Common myeloid progenitor, CD34-positive (primary cell): ENCODE measurements at regions of chr1 and their contacts with region 1.

Region 1: GRCh38 chr1:159161001-159161718 is 10.3 kb upstream of the CADM3 start:
- DNase-seq: peak; percentile 75 to 84 (median 80)
- H3K4me3 ChIP-seq: no peak overlapping the region
- H3K27ac ChIP-seq: no peak overlapping the region
- H3K4me1 ChIP-seq: no peaks in the 10 kb centered on the region
- H3K27me3 ChIP-seq: peaks cover 0 to 10% (median 4%) of the 10 kb centered on the region in 5 experiments

Region 2: DNA sequence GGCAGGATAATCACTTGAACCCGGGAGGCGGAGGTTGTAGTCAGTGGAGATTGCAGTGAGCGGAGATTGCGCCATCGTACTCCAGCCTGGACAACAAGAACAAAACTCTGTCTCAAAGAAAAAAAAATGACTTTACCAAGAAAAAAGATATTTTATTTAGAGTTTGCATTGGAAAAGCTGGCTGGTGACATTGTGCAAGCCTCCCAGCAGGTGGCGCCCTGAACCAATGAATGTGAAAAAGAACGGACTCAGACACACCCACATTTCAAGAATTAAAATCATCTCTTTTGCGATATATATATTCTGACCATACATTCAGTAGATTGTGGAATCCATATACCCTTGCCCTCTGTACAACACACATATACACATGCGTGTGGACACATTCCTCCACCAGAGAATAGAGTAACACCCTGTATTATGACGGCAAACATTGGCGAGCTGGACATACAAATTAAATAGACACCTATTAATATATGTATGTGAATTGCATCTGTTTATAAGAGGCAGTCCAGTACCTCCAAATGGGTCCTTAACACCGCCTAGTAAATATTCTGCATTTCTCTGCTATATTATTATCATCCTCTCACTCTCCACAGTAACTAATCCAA is 28.8 kb before region 1 on chr1:
- CTCF ChIA-PET with region 1: interaction called, 19 read pairs
- POLR2A ChIA-PET with region 1: no interaction called
- DNase-seq: peak; percentile 57 to 86 (median 74)
- H3K4me3 ChIP-seq: no peak overlapping the region
- H3K27ac ChIP-seq: no peak overlapping the region
- H3K4me1 ChIP-seq: no peaks in the 10 kb centered on the region
- H3K27me3 ChIP-seq: peaks cover 0 to 6% (median 2%) of the 10 kb centered on the region in 5 experiments

Region 3: GRCh38 chr1:159184201-159184600 is 23.0 kb after region 1 on chr1:
- CTCF ChIA-PET with region 1: interaction called, 15 read pairs
- POLR2A ChIA-PET with region 1: no interaction called
- DNase-seq: no peak
- H3K4me3 ChIP-seq: no peak overlapping the region
- H3K27ac ChIP-seq: no peak overlapping the region
- H3K4me1 ChIP-seq: peaks cover 0 to 10% (median 5%) of the 10 kb centered on the region in 4 experiments
- H3K27me3 ChIP-seq: peaks cover 16 to 59% (median 29%) of the 10 kb centered on the region in 5 experiments

Region 4: DNA sequence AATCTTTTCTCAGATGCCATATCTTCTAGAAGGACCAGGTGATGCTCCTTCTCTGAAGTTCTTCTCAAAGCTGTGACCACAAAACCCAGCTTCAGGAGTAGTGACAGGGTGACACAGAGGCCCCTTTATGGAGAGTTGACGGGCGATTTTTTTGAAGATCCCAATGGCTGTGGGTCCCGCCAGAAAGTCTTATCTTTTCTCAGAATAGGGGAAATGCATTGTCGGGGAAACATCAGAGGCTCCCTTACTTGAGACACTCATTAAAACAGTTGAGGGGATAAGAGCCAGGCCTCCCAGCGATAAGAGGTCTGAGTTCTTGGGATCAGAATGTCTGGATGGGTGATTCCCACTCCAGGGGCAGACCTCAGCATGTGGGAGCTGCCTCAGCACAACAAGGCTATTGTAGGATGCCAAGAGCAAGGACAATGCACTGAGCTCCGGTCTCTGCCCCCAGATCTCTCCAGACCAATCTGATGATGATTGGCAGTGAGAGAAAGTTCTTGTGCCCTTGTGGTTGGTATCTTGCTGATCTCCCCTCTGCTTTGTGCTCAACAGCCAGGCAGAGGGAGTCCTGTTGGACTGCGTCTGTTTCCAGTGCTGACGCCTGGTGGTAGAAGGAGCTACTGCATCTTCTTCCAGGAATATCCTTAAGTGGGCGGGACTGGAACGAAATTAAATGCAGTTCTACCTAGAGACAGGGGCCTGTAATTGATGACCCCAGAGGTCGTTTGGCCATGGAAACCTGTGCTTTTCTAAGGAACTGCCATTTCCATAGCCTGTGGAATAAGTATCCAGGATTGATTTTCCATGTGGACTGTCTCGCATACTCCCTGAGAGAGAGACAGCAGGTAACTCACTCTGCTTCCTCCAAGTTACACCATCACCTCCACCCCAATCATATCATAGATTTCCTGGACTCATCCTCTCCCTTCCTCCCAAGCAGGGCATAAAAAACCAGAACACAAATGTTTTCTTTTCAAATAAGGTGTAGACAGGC is 36.7 kb after region 1 on chr1:
- CTCF ChIA-PET with region 1: interaction called, 230 read pairs
- POLR2A ChIA-PET with region 1: no interaction called
- DNase-seq: peak; percentile 78 to 90 (median 83)
- H3K4me3 ChIP-seq: peak overlapping the region in 1 of 7 experiments; percentile 5
- H3K27ac ChIP-seq: no peak overlapping the region
- H3K4me1 ChIP-seq: peaks cover 0 to 46% (median 31%) of the 10 kb centered on the region in 4 experiments
- H3K27me3 ChIP-seq: peaks cover 0 to 2% (median 0%) of the 10 kb centered on the region in 5 experiments

Region 5: DNA sequence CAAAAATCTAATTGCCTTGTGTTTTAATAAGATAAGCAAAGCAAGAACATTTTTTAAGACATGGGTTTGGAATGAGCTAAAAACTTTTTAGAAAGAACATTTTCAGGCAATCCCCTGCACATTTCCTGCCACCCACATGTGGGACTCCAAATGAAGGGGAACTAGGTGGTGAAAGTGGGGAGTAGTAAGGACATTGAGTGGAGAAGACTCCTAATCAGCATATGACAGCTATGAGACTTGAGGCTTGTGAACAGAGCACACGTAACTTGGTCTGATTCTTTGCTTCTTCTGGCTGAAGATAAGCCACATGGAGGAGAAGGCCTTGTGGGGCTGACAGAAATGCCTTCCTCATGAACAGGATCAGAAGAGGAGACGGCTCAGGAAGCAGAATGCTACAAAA is 191.3 kb after region 1 on chr1:
- CTCF ChIA-PET with region 1: no interaction called
- POLR2A ChIA-PET with region 1: no interaction called
- DNase-seq: peak; percentile 39 to 88 (median 72)
- H3K4me3 ChIP-seq: no peak overlapping the region
- H3K27ac ChIP-seq: no peak overlapping the region
- H3K4me1 ChIP-seq: peaks cover 0 to 8% (median 0%) of the 10 kb centered on the region in 4 experiments
- H3K27me3 ChIP-seq: no peaks in the 10 kb centered on the region